ENCODE measurements at regions of chr12 and their contacts with region 1.

Region 1: GRCh38 chr12:93766796-93767523 is 89.8 kb downstream of the CRADD start:
- DNase-seq: peak; percentile 29
- H3K4me3 ChIP-seq: no peak overlapping the region
- H3K27ac ChIP-seq: peak overlapping the region; percentile 27 to 65 (median 46)
- H3K4me1 ChIP-seq: peaks cover 0 to 21% (median 7%) of the 10 kb centered on the region in 4 donors
- H3K27me3 ChIP-seq: no peaks in the 10 kb centered on the region
- CTCF ChIP-seq: peak; percentile 35 to 60 (median 54)
- EP300 ChIP-seq: no peak
- POLR2A ChIP-seq: no peak

Region 2: DNA sequence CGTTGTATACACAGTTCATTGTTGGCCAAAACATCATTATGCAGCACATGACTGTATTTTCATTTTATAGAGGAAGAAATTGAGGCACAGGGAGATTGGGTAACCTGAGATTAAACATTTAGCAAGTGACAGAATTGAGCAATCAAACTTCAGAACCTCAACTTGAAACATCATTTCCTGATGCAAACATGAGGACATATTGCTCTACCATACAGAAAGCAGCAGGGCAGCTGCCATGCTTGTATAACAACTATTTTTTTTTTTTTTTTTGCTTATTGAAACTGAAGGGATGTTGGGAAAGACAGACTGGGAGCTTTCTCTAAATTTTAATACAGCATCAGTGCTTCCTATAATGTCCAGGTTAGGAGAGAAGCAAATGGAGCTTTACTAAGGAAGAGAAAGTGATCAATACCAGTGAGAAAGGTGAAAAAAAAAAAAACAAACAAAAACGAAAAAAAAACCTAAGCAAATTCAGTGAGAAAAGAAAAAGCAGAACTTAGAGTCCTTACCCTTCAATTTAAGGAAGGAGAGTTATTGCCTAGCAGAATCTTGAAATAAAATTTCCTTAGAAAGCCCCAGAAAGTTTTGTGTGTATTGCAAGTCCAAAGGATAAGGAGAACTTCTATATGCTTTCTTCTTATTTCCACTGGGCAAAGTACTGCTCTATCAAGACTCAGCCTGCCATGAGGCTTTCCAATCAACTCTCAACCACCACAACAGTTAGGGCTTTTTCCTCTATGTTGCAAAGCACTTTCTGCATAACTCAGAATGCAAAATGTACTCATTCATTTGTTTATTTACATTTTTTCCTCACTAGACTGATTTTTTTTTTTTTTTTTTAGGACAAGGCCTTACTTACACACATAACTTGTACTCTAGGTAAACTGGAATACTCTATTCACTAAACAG is 1642.9 kb before region 1 on chr12:
- in situ Hi-C with region 1: no loop called
- intact Hi-C with region 1: loop called (anchors 5 kb)
- DNase-seq: no peak
- H3K4me3 ChIP-seq: no peak overlapping the region
- H3K27ac ChIP-seq: peak overlapping the region in 1 of 4 donors; percentile 27
- H3K4me1 ChIP-seq: peaks cover 0 to 4% (median 0%) of the 10 kb centered on the region in 4 donors
- H3K27me3 ChIP-seq: no peaks in the 10 kb centered on the region
- CTCF ChIP-seq: no peak
- EP300 ChIP-seq: no peak
- POLR2A ChIP-seq: no peak

Region 3: GRCh38 chr12:93733358-93733757 is 33.6 kb before region 1 on chr12:
- in situ Hi-C with region 1: no loop called
- intact Hi-C with region 1: no loop called
- DNase-seq: no peak
- H3K4me3 ChIP-seq: no peak overlapping the region
- H3K27ac ChIP-seq: no peak overlapping the region
- H3K4me1 ChIP-seq: peaks cover 3 to 28% (median 15%) of the 10 kb centered on the region in 4 donors
- H3K27me3 ChIP-seq: no peaks in the 10 kb centered on the region
- CTCF ChIP-seq: no peak
- EP300 ChIP-seq: no peak
- POLR2A ChIP-seq: no peak

Region 4: GRCh38 chr12:93894391-93895088 is 127.6 kb after region 1 on chr12:
- in situ Hi-C with region 1: no loop called
- intact Hi-C with region 1: loop called (anchors 10 kb)
- DNase-seq: peak; percentile 44
- H3K4me3 ChIP-seq: no peak overlapping the region
- H3K27ac ChIP-seq: peak overlapping the region; percentile 48 to 82 (median 70)
- H3K4me1 ChIP-seq: peaks cover 0 to 42% (median 15%) of the 10 kb centered on the region in 4 donors
- H3K27me3 ChIP-seq: no peaks in the 10 kb centered on the region
- CTCF ChIP-seq: no peak
- EP300 ChIP-seq: peak; percentile 30
- POLR2A ChIP-seq: no peak

Region 5: DNA sequence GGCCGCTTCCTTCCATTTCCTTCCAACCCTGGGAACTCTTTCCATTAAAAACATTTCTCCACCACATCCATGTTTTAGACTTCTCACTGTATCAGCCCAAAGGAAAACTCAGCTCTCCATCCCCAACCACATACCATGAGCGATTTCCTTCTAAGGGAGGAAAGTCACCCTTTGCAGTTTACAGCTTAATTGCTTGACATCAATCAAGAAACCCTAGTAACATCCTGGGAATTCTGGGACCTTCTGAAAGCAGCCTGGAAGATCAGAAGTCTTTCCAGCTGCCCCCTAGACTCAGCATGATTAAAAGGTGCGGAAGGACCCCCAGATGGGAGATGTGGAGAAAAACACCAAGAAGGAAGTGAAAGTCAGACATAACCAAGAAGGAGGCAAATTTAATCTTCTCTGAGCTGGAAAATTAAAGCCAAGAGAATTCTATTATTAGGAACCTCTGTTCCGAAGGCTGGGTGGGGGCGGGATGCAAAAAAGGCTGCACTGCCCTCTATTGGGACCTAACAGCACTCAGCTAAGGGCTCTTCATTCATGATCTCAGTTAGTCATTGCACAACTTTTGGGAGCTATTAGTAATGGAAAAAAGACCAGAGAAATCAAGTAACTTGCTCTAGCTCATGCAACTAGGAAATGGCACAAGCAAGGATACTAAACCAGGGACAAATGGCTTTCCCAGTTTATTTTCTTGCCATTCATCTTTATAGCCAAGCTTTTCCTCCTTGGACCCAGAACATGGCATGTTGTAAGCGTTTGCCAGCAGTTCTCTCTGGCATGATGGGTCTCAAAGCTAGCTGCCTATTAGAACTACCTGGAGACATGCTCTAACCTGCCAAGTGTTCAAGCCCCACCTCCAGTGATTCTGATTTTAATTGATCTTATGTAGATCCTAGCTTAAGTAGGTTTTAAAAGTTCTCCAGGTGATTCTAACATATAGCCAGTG is 308.3 kb after region 1 on chr12:
- in situ Hi-C with region 1: loop called in 3 of 4 experiments (anchors 25 kb)
- intact Hi-C with region 1: no loop called
- DNase-seq: peak; percentile 35
- H3K4me3 ChIP-seq: no peak overlapping the region
- H3K27ac ChIP-seq: peak overlapping the region; percentile 56 to 69 (median 64)
- H3K4me1 ChIP-seq: peaks cover 8 to 43% (median 20%) of the 10 kb centered on the region in 4 donors
- H3K27me3 ChIP-seq: no peaks in the 10 kb centered on the region
- CTCF ChIP-seq: peak; percentile 49 to 61 (median 50)
- EP300 ChIP-seq: no peak
- POLR2A ChIP-seq: no peak